ENCODE measurements at regions of chr4 and their contacts with region 1.

Region 1: GRCh38 chr4:89434364-89434988 is 126.9 kb upstream of the GPRIN3 start:
- DNase-seq: no peak
- ATAC-seq: peak; percentile 71
- H3K4me3 ChIP-seq: no peak overlapping the region
- H3K27ac ChIP-seq: no peak overlapping the region
- H3K4me1 ChIP-seq: no peaks in the 10 kb centered on the region
- H3K27me3 ChIP-seq: no peaks in the 10 kb centered on the region; a peak in 1 of 4 replicates
- CTCF ChIP-seq: peak; percentile 62 to 70 (median 67)
- EP300 ChIP-seq: no peak
- POLR2A ChIP-seq: no peak
- RAD21 ChIP-seq: peak; percentile 77

Region 2: DNA sequence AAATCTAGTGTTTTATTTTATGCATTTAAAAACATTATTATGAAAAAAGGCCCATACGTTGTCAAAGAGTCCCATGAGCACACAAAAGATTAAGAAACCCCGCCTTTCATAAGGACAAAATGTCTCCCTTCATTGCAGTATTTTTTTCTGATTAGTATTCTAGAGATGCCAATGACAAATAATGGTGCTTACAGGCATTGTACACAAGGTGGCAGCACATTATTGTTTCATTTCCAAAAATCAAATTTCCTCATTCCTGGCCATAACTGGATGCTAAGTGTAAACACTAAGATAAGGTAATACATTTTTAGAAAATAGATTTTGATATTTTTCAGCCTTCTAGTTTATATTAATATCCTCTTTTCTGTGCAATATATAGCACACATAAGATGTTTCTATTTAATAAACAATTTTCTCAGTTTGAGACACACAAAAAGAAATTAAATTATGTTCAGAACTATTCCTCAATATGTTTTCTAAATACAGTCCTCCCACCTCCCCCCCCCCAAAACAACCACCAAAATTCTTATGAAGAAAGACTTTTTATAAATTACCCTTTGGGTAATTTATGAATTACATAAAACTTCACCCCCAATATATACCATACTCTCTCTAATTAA is 275.5 kb before region 1 on chr4:
- CTCF ChIA-PET with region 1: interaction called, 13 read pairs
- POLR2A ChIA-PET with region 1: no interaction called
- RAD21 ChIA-PET with region 1: interaction called, 5 read pairs
- SMC1A ChIA-PET with region 1: interaction called, 5 read pairs
- in situ Hi-C with region 1: no loop called
- intact Hi-C with region 1: loop called (anchors 1 kb)
- DNase-seq: no peak
- ATAC-seq: peak; percentile 81
- H3K4me3 ChIP-seq: no peak overlapping the region
- H3K27ac ChIP-seq: no peak overlapping the region
- H3K4me1 ChIP-seq: no peaks in the 10 kb centered on the region
- H3K27me3 ChIP-seq: no peaks in the 10 kb centered on the region; a peak in 1 of 4 replicates
- CTCF ChIP-seq: peak; percentile 62 to 71 (median 70); a peak in 5 of 6 replicates
- EP300 ChIP-seq: no peak
- POLR2A ChIP-seq: no peak
- RAD21 ChIP-seq: peak; percentile 59